ENCODE measurements at regions of chr14 and their contacts with region 1.

Region 1: GRCh38 chr14:50038398-50039119 is 77.8 kb downstream of the VCPKMT start:
- DNase-seq: no peak
- ATAC-seq: peak; percentile 78
- H3K4me3 Mint-ChIP-seq: peak overlapping the region; percentile 52
- H3K27ac Mint-ChIP-seq: peak overlapping the region; percentile 93
- H3K4me1 Mint-ChIP-seq: peaks cover 45% of the 10 kb centered on the region
- H3K27me3 Mint-ChIP-seq: no peaks in the 10 kb centered on the region
- CTCF ChIP-seq: no peak

Region 2: GRCh38 chr14:49951691-49952345 is 86.7 kb before region 1 on chr14:
- CTCF ChIA-PET with region 1: no interaction called
- POLR2A ChIA-PET with region 1: no interaction called
- intact Hi-C with region 1: no loop called
- DNase-seq: no peak
- ATAC-seq: no peak
- H3K4me3 Mint-ChIP-seq: no peak overlapping the region
- H3K27ac Mint-ChIP-seq: no peak overlapping the region
- H3K4me1 Mint-ChIP-seq: peaks cover 21% of the 10 kb centered on the region
- H3K27me3 Mint-ChIP-seq: no peaks in the 10 kb centered on the region
- CTCF ChIP-seq: no peak

Region 3: DNA sequence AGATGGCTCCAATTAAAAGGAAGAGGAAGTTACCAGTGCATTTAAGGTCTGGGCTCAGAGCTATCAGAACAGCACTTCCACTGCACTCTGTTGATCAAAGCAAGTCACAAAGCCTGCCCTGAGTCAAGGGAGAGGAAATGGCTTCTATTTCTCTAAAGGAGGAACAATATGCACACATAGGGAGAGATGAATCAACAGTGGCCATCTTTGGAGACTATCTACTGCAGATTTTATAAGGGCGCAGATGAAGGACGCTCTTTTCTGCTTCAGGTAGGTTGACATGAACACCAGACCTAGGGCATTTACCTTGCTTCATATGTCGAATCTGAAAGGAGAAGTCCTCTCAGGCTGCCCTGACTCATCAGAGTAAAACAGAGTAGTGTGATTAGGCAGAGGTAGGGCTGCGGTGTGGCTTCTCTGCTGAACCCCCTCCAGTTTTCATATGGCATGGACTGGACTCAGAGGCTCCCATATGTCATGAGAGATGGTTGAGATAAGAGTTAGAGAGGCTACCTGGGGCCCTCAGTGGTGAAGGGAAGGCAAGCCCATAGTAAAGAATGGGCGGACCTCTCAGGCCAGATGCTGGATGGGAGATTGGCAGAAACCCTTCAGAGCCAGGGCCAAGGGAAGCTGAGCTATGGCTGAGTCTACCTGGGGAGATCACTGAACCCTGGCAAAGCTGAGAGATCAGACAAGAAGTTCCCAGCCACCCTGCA is 61.3 kb before region 1 on chr14:
- CTCF ChIA-PET with region 1: interaction called, 3 read pairs
- POLR2A ChIA-PET with region 1: interaction called, 22 read pairs
- intact Hi-C with region 1: loop called (anchors 1 kb)
- DNase-seq: no peak
- ATAC-seq: peak; percentile 87
- H3K4me3 Mint-ChIP-seq: peak overlapping the region; percentile 76
- H3K27ac Mint-ChIP-seq: peak overlapping the region; percentile 95
- H3K4me1 Mint-ChIP-seq: peaks cover 88% of the 10 kb centered on the region
- H3K27me3 Mint-ChIP-seq: no peaks in the 10 kb centered on the region
- CTCF ChIP-seq: no peak

Region 4: DNA sequence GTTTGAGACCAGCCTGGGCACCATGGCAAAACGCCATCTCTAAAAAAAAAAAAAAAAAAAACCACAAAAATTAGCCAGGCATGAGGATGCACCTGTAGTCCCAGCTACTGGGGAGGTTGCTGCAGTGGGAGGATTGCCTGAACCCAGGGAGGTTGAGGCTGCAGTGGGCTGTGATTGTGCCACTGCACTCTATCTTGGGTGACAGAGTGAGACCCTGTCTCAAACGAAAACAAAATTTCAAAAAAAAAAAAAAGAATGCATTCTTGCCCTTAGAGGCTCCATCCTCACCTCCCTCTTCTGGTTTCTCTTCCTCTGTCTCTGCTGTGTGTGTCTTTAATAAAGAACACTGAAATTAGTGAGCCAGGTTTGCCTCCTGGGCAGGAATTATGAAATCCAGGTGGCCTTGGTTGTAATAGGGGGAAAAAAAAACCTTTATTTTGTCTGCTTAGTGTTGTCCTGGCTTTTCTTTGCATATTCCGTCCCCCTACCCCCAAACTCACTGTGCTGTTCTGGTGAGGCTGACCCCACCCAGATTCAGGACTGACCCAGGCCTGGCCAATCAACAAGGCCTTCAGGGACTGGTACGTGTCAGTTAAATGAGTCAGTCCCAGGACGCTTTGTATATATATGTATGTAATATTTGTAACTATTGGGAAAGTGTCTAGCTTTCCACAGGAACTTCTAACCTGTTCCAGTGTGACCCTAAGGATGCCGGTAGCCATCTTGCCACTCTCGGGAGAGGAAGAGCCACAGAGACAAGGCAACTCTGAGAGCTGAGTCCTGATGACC is 29.8 kb before region 1 on chr14:
- CTCF ChIA-PET with region 1: interaction called, 9 read pairs
- POLR2A ChIA-PET with region 1: interaction called, 81 read pairs
- intact Hi-C with region 1: loop called (anchors 1 kb)
- DNase-seq: no peak
- ATAC-seq: peak; percentile 74
- H3K4me3 Mint-ChIP-seq: peak overlapping the region; percentile 13
- H3K27ac Mint-ChIP-seq: peak overlapping the region; percentile 84
- H3K4me1 Mint-ChIP-seq: peaks cover 64% of the 10 kb centered on the region
- H3K27me3 Mint-ChIP-seq: no peaks in the 10 kb centered on the region
- CTCF ChIP-seq: no peak

Region 5: DNA sequence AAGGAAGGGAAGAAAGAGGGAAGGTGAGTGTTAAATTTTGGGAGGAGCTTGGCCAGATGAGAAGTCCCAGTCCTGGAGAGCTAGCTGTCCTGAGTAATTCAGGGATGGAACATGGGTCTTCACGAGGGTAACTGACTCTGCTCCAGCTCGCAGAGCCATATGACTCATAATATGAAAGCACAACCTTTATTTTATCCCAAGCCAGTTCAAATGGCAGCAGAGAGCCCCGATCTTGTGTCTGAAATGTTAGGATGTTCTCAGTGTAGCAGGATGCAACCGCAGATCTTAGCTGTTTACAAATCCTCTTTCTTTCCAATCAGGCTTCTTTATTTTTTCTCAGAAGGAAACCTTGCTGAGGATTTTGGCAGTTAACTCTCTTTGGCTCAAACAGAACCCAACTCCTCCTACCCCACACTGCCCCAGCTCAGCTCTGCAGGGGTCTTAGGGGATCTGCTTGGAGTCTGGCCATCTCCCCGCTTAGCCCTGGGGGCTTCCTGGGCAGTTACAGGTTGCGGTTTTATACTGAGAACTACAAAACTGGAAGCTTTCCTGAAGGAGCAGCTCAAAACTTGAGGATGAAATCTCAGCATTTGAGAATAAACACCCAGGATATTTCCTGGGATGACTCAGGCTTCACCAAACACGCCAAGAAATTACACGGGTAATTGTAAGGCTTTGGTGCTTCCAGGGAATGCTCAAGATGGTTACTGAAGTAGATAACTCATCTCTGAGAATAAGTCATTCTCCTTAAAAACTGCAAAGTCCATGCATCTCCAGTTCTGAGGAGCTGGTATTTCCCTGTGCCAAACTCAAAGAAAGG is 14.7 kb before region 1 on chr14:
- CTCF ChIA-PET with region 1: interaction called, 4 read pairs
- POLR2A ChIA-PET with region 1: interaction called, 8 read pairs
- intact Hi-C with region 1: loop called (anchors 2 kb)
- DNase-seq: no peak
- ATAC-seq: no peak
- H3K4me3 Mint-ChIP-seq: no peak overlapping the region
- H3K27ac Mint-ChIP-seq: no peak overlapping the region
- H3K4me1 Mint-ChIP-seq: peaks cover 18% of the 10 kb centered on the region
- H3K27me3 Mint-ChIP-seq: no peaks in the 10 kb centered on the region
- CTCF ChIP-seq: no peak